Esophagus muscularis mucosa (tissue), 4 donors: ENCODE measurements at regions of chr13 and their contacts with region 1.

Region 1: DNA sequence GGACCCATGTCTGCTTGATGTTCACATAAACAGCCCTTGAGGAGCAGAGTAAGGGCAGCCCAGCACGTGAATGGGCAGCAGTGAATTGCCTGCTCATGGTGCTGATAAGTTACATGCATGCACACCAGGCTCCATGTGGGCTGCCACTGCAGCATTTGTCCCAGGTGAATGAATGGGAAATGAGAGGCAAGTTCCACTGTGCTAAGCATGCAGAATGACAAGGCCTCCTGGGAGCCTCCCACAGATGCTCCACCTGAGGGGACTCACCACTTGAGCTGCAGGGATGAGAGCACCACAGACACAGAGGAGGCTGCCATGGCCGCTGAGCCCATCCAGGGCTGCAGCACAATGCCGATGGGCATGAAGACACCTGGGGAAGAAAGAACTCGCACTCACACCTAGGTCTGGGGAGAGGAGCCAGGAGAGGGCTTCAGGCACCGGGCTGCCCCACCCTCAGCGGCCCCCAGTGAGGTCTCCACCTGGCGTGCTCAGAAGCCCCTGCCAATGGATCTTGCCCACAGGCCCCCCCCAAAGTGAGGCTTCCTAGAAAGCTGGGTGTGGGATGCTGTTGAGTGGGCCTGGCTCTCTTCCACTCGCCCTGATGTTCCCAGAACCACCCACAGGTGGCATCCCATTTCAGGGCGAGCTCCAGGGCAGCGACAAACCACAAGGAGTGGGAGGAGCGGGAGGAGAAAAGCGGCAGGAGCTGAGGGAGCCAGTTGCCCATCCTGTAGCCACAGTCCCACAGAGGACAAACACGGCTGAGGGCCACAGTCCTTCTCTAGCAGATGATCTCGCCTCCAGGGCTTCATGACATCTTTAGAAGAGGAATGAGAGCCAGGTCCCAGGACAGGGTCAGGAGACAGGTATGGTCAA is 73.8 kb downstream of the CCDC70 start:
- DNase-seq: no peak
- H3K4me3 ChIP-seq: no peak overlapping the region
- H3K27ac ChIP-seq: no peak overlapping the region
- H3K4me1 ChIP-seq: no peaks in the 10 kb centered on the region
- H3K27me3 ChIP-seq: no peaks in the 10 kb centered on the region
- CTCF ChIP-seq: peak; percentile 7 to 35 (median 19)
- EP300 ChIP-seq: no peak
- POLR2A ChIP-seq: no peak

Region 2: DNA sequence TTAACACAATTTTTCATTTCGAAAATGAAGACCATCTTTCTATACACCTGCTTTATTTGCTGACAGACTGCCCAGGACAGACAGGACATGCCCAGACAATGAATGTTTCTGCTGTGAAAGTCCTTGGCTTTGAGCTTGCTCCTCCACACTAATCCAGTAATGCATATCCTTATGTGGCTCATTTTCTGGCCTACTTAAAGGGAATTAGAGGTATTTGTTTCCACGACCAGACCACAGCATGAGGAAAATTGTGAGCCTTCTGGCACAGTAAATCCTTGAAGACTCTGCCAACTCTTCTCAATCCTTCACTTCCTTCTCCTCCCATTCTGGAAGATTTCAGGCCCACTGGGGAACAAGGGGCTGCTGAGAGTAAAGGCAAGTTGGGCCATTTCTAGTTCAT is 48.1 kb before region 1 on chr13:
- intact Hi-C with region 1: loop called (anchors 2 kb)
- DNase-seq: no peak
- H3K4me3 ChIP-seq: no peak overlapping the region
- H3K27ac ChIP-seq: no peak overlapping the region
- H3K4me1 ChIP-seq: no peaks in the 10 kb centered on the region
- H3K27me3 ChIP-seq: no peaks in the 10 kb centered on the region
- CTCF ChIP-seq: no peak
- EP300 ChIP-seq: no peak
- POLR2A ChIP-seq: no peak

Region 3: GRCh38 chr13:51988988-51989618 is 53.5 kb after region 1 on chr13:
- intact Hi-C with region 1: no loop called
- DNase-seq: no peak
- H3K4me3 ChIP-seq: no peak overlapping the region
- H3K27ac ChIP-seq: no peak overlapping the region
- H3K4me1 ChIP-seq: no peaks in the 10 kb centered on the region
- H3K27me3 ChIP-seq: no peaks in the 10 kb centered on the region
- CTCF ChIP-seq: no peak
- EP300 ChIP-seq: no peak
- POLR2A ChIP-seq: no peak